ENCODE measurements at regions of chr19 and their contacts with region 1.

Region 1: DNA sequence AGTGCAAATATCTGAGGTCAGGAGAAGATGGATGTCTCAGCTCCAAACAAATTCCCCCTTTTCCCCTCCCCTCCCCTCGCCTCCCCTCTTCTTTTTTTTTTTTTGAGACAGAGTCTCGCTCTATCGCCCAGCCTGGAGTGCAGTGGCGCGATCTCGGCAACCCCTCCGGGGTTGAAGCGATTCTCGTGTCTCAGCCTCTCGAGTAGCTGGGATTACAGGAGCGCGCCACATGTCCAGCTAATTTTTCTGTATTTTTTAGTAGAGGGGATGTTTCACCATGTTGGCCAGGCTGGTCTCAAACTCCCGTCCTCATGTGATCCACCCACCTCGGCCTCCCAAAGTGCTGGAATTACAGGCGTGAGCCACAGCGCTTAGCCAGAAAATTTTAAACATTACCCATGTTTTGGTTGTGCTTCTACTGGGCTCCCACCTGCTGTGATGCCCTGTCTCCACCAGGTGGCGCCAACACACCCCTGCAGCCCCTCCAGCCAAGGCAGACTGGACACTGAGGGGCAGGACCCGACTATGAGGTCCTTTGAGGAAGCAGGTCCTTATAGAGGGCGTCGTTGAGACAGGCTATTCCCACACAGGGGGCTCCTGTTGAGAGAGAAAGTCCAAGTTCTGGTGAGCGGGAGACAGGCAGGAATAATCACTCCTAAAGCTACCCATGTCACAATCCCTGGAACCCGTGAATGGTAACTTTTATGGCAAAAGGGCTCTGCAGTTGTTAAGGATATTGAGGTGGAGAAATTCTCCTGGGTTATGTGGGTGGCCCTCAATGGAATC is 6.3 kb downstream of the ERICH4 start:
- DNase-seq: peak; percentile 89
- ATAC-seq: peak; percentile 94
- H3K4me3 Mint-ChIP-seq: peak overlapping the region; percentile 70
- H3K27ac Mint-ChIP-seq: no peak overlapping the region
- H3K4me1 Mint-ChIP-seq: peaks cover 3% of the 10 kb centered on the region
- H3K27me3 Mint-ChIP-seq: peaks cover 62% of the 10 kb centered on the region
- CTCF ChIP-seq: peak; percentile 96

Region 2: DNA sequence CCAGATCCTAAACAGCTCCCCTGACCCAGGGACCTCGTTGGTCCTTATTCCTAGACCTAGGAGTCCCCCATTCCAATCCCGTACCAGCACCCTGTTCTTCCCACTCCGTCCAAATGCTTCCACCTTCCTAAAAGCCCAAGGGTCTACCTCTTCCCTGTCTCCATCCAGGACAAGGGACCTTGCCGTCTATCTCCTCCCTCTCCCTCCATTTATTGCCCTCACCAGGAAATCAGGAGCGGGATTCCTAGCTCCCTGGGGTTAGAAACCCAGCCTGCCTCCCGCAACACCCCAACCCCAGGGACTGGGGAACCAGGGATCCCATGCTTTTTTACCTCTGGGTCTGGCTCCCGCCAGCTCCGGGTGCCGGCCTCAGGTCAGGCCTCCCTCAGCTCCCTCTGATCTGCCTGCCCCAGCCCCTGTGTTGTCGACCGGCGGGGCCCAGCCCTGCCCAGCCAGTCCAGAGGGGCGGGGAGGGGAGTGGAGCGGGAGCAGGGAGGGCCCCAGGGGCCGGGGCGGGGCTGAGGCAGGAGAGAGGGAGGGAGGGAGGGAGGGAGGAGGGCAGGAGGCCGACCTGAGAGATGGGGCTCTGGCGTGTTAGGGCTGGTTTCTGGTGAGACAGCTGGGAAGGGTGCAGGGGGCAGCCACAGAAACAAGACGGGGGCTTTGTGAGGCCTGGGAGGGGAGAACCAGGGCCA is 22.2 kb before region 1 on chr19 and contains the start of gene B3GNT8:
- CTCF ChIA-PET with region 1: interaction called, 17 read pairs
- POLR2A ChIA-PET with region 1: no interaction called
- DNase-seq: peak; percentile 89
- ATAC-seq: peak; percentile 89
- H3K4me3 Mint-ChIP-seq: peak within 1 kb of the TSS; percentile 84
- H3K27ac Mint-ChIP-seq: peak within 1 kb of the TSS; percentile 95
- H3K4me1 Mint-ChIP-seq: peaks cover 21% of the 10 kb centered on the region
- H3K27me3 Mint-ChIP-seq: no peaks in the 10 kb centered on the region
- CTCF ChIP-seq: no peak
- total RNA-seq, gene B3GNT8: 0.96 to 2.3 TPM (median 1.2 TPM) in 3 replicates

Region 3: DNA sequence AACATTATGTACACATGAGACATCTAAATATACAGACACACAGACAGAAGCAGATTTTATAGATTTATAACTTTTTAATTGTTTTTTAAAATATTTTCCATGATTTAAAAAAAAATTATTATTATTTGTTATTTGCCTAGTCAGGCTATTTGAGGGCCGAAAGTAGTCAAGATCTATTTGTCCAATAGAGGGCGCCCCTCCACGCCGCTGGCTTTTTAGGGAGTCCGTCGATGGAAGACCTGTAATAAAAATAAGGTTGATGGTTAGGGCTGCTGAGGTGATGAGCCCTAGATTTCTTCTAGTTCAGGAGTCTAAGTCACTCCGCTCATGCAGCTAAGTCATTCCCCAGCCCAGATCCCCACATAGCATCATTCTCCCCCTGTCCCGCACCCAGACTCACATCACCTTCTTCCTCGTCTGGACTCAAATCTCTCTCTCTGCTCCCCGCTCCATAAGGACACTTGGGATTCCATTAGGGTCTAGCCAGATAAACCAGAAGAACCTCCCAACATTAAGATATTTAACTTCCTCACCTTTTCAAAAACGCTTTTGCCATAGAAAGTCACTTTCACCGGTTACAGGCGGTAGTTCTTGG is 92.8 kb after region 1 on chr19:
- CTCF ChIA-PET with region 1: interaction called, 23 read pairs
- POLR2A ChIA-PET with region 1: no interaction called
- DNase-seq: peak; percentile 81
- ATAC-seq: peak; percentile 55
- H3K4me3 Mint-ChIP-seq: no peak overlapping the region
- H3K27ac Mint-ChIP-seq: no peak overlapping the region
- H3K4me1 Mint-ChIP-seq: peaks cover 19% of the 10 kb centered on the region
- H3K27me3 Mint-ChIP-seq: peaks cover 27% of the 10 kb centered on the region
- CTCF ChIP-seq: peak; percentile 62

Region 4: DNA sequence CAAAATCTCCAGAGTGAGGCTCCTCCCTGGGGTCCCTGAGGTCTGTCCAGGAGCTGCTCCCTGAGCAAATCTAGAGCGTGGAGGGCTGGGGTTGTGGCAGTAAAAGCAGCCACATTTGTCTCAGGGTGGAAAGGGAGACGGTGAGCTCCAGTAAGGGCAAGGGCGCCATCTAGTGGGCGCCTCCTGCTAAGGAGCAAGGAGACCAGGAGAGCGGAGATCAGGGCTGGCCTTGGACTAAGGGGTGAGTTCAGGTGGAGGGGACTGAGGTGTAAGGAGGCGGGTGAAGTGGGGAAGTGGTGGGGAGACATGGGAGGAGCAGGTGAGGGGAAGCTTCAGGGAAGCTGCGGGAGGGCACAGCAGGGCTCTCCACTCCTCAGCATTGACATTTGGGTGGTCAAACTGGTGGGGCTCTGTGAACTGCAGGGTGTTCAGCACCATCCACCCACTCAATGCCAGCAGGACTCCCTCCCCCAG is 121.4 kb after region 1 on chr19:
- CTCF ChIA-PET with region 1: interaction called, 310 read pairs
- POLR2A ChIA-PET with region 1: no interaction called
- DNase-seq: peak; percentile 87
- ATAC-seq: peak; percentile 97
- H3K4me3 Mint-ChIP-seq: no peak overlapping the region
- H3K27ac Mint-ChIP-seq: no peak overlapping the region
- H3K4me1 Mint-ChIP-seq: peaks cover 3% of the 10 kb centered on the region
- H3K27me3 Mint-ChIP-seq: peaks cover 87% of the 10 kb centered on the region
- CTCF ChIP-seq: peak; percentile 87